ENCODE measurements at regions of chr4 and their contacts with region 1.

Region 1: DNA sequence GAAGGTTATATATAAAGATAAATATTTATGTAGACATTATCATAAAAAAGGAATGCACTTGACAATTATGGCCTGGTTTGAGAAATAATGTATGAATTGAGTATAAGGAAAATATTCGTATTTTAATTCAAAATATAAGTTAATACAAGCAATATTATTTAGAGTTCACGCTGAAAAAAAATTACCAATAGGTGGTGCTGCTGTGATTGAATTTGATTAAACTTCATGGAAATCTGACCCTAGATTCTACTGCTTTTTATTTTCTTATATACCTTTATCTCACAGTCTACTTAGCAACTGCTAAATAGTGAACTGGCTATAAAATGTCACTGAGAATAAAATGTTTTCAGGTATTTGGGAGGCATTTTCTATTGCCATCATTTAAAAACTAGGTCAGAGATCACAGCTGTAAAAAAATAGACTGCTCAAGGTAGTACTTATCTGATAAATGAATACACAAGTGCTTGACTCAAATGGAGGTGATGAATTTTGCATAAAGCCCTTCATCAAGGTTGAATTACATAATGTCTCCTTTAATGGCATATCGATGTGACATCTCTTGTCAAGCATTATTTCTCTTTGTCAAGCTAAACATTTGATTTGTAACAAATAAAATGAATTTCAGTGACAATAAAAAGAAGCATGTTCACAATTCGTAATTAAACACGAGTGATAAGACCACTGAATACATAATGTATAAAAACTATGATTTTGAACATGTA is 1638.8 kb upstream of the PCDH7 start:
- DNase-seq: peak; percentile 65
- H3K4me3 ChIP-seq: no peak overlapping the region
- H3K27ac ChIP-seq: no peak overlapping the region
- H3K4me1 ChIP-seq: no peaks in the 10 kb centered on the region
- H3K27me3 ChIP-seq: no peaks in the 10 kb centered on the region
- CTCF ChIP-seq: peak; percentile 26
- POLR2A ChIP-seq: no peak

Region 2: DNA sequence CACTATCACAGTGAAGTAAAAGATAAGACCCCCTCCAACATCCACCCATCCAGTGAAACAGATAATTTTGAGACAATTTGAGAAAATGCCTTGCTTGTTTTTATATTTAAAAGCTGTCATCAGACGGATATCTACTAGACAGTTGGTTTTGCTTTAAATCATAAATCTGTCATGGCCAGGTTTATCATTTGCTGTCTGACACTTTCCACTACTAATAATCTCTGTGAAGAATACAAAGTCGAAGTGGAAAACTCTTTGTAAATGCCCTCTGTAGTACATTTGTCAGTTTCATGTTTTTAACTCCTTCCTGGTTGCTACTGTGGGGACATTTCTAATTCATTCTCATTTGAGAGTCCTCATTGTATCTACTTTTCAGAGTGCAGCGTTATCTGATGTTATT is 32.6 kb after region 1 on chr4:
- CTCF ChIA-PET with region 1: no interaction called
- POLR2A ChIA-PET with region 1: no interaction called
- dilution Hi-C with region 1: no loop called
- intact Hi-C with region 1: no loop called
- DNase-seq: no peak
- H3K4me3 ChIP-seq: no peak overlapping the region
- H3K27ac ChIP-seq: no peak overlapping the region
- H3K4me1 ChIP-seq: no peaks in the 10 kb centered on the region
- H3K27me3 ChIP-seq: no peaks in the 10 kb centered on the region
- CTCF ChIP-seq: no peak
- POLR2A ChIP-seq: no peak

Region 3: GRCh38 chr4:29423836-29424721 is 342.7 kb after region 1 on chr4:
- CTCF ChIA-PET with region 1: interaction called, 3 read pairs
- POLR2A ChIA-PET with region 1: no interaction called
- dilution Hi-C with region 1: no loop called
- intact Hi-C with region 1: loop called (anchors 10 kb)
- DNase-seq: peak; percentile 13
- H3K4me3 ChIP-seq: no peak overlapping the region
- H3K27ac ChIP-seq: no peak overlapping the region
- H3K4me1 ChIP-seq: no peaks in the 10 kb centered on the region
- H3K27me3 ChIP-seq: no peaks in the 10 kb centered on the region
- CTCF ChIP-seq: no peak
- POLR2A ChIP-seq: no peak